ENCODE measurements at regions of chr13 and their contacts with region 1.

Region 1: DNA sequence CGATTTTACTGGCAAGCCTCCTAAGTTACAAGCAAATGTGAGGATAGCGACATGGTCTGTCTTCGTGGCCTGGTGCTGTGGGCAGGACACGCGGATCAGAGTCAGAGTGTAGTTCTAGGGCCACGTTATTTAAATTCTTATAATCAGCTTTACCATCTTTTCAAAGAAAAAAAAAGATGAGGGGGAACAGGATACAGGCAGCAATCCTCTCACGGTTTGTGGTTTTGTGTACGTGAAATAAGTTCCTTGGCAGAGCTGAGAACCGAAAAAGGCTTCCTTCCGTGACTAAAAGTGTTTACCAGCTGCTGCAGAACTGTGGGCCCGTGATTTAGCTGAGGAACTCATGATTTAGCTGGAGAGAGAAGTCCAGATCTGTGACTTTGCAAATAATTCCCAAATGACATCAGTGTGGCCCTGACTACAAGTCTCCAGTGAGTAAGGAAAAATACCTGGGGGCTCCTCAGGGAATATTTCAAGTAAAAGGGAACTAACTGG is 27.2 kb downstream of the RCBTB2 start:
- DNase-seq: peak in 1 of 2 donors; percentile 68
- ATAC-seq: peak; percentile 57 to 89 (median 84)
- H3K4me3 ChIP-seq: peak overlapping the region in 5 of 10 donors; percentile 6 to 29 (median 20)
- H3K27ac ChIP-seq: peak overlapping the region; percentile 47 to 92 (median 75)
- H3K4me1 ChIP-seq: peaks cover 0 to 77% (median 34%) of the 10 kb centered on the region in 9 donors
- H3K27me3 ChIP-seq: no peaks in the 10 kb centered on the region
- CTCF ChIP-seq: no peak

Region 2: GRCh38 chr13:48448959-48449614 is 56.6 kb before region 1 on chr13:
- intact Hi-C with region 1: loop called in 1 of 10 experiments (anchors 10 kb)
- DNase-seq: no peak
- ATAC-seq: peak in 2 of 8 donors; percentile 47 to 59
- H3K4me3 ChIP-seq: peak overlapping the region in 6 of 10 donors; percentile 5 to 21 (median 10)
- H3K27ac ChIP-seq: peak overlapping the region in 7 of 10 donors; percentile 7 to 69 (median 30)
- H3K4me1 ChIP-seq: peaks cover 0 to 46% (median 12%) of the 10 kb centered on the region in 9 donors
- H3K27me3 ChIP-seq: no peaks in the 10 kb centered on the region
- CTCF ChIP-seq: no peak

Region 3: DNA sequence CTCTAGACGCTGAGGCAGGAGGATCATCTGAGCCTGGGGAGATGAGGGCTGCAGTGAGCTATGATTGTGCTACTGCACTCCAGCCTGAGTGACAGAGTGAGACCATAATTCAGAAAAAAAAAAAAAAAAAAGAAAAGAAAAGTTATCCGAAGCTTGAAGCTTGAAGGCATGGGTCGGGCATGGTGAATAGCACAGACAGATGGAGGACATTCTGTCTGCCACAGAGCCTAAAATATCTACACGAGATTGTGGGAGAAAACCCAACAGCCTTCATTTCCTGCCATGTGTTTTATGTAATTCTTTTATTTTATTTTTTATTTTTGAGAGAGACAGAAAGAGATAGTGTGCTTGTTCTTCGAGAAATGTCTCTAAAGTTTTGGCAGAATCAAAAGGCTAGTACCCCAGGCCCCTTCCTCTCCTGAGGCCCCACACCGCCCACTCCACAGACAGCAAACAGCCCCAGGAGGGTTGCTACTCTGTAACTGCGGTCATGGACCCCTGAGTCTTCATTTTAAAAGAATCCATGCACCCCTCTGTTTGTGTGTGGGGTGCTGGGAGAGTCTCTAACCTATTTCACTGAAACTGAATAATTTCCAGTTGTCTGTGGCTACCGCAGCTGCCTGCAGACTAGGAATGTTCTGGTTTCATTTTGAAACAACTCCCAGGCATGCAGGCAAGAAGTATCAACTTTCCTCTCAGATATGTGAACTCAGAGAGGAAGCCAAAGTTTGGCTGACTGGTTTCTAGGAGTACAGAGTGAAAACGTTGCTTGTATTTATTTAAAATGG is 65.7 kb after region 1 on chr13:
- intact Hi-C with region 1: loop called in 2 of 10 experiments (anchors 5 to 10 kb)
- DNase-seq: peak in 1 of 2 donors; percentile 59
- ATAC-seq: peak; percentile 40 to 82 (median 70)
- H3K4me3 ChIP-seq: peak overlapping the region in 7 of 10 donors; percentile 23 to 46 (median 30)
- H3K27ac ChIP-seq: peak overlapping the region; percentile 60 to 92 (median 83)
- H3K4me1 ChIP-seq: peaks cover 0 to 88% (median 72%) of the 10 kb centered on the region in 9 donors
- H3K27me3 ChIP-seq: no peaks in the 10 kb centered on the region
- CTCF ChIP-seq: no peak